ENCODE measurements at regions of chr16 and their contacts with region 1.

Region 1: GRCh38 chr16:87246269-87247065 is 70.7 kb downstream of the C16orf95 start:
- DNase-seq: no peak
- ATAC-seq: no peak
- H3K4me3 Mint-ChIP-seq: no peak overlapping the region
- H3K27ac Mint-ChIP-seq: no peak overlapping the region
- H3K4me1 Mint-ChIP-seq: peaks cover 30% of the 10 kb centered on the region
- H3K27me3 Mint-ChIP-seq: no peaks in the 10 kb centered on the region
- CTCF ChIP-seq: no peak

Region 2: GRCh38 chr16:87033541-87034300 is 212.7 kb before region 1 on chr16:
- CTCF ChIA-PET with region 1: no interaction called
- POLR2A ChIA-PET with region 1: no interaction called
- DNase-seq: no peak
- ATAC-seq: no peak
- H3K4me3 Mint-ChIP-seq: no peak overlapping the region
- H3K27ac Mint-ChIP-seq: no peak overlapping the region
- H3K4me1 Mint-ChIP-seq: 0 out of 2 replicates have a peak, but pooled peaks cover 4% of the 10 kb centered on the region
- H3K27me3 Mint-ChIP-seq: peaks cover 3% of the 10 kb centered on the region; the same call in 1 of the 2 replicates
- CTCF ChIP-seq: no peak

Region 3: GRCh38 chr16:87216474-87217275 is 29.8 kb before region 1 on chr16:
- CTCF ChIA-PET with region 1: no interaction called
- POLR2A ChIA-PET with region 1: no interaction called
- DNase-seq: no peak
- ATAC-seq: no peak
- H3K4me3 Mint-ChIP-seq: no peak overlapping the region
- H3K27ac Mint-ChIP-seq: no peak overlapping the region
- H3K4me1 Mint-ChIP-seq: no peaks in the 10 kb centered on the region
- H3K27me3 Mint-ChIP-seq: no peaks in the 10 kb centered on the region
- CTCF ChIP-seq: no peak

Region 4: GRCh38 chr16:87233926-87234325 is 12.5 kb before region 1 on chr16:
- CTCF ChIA-PET with region 1: interaction called, 10 read pairs
- POLR2A ChIA-PET with region 1: no interaction called
- DNase-seq: peak; percentile 34
- ATAC-seq: peak; percentile 51
- H3K4me3 Mint-ChIP-seq: no peak overlapping the region
- H3K27ac Mint-ChIP-seq: no peak overlapping the region
- H3K4me1 Mint-ChIP-seq: no peaks in the 10 kb centered on the region
- H3K27me3 Mint-ChIP-seq: no peaks in the 10 kb centered on the region
- CTCF ChIP-seq: no peak

Region 5: DNA sequence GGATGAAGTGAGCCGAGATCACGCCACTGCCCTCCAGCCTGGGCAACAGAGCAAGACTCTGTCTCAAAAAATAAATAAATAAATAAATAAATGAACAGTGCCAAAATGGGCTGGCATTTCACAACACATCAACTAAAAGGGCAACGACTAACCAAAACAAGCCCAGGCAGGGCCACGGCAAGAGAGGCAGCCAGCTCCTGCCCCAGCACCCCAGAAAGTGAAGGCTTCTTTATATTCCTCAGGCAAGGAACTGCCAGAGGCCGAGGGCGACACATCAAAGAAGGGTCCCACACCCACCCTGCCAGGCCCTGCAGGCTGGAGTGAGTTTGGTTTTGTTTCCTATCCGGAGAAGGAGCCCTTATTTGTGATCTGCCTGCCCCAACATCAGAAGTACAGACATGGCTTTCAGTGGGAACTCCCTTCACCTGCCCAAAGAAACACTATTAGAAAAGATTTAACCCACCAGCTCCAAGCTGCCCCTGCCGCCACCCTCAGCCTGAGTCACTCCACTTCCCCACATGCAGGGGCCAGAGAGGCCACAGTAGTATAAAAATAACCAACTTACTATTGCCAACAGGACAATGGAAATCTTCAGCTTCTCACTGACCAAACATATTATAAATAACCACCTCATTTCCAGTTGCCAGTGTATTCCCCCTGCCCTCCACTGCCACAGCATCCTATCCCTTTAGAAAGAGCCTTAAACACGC is 129.1 kb after region 1 on chr16:
- CTCF ChIA-PET with region 1: no interaction called
- POLR2A ChIA-PET with region 1: no interaction called
- DNase-seq: no peak
- ATAC-seq: no peak
- H3K4me3 Mint-ChIP-seq: no peak overlapping the region
- H3K27ac Mint-ChIP-seq: no peak overlapping the region
- H3K4me1 Mint-ChIP-seq: peaks cover 10% of the 10 kb centered on the region
- H3K27me3 Mint-ChIP-seq: no peaks in the 10 kb centered on the region
- CTCF ChIP-seq: no peak

Measured in WTC11 (cell line).